Posterior cingulate gyrus (tissue), 11 donors: ENCODE measurements at regions of chr17 and their contacts with region 1.

Region 1: GRCh38 chr17:7561028-7561575 is 617 bp upstream of the SENP3 start:
- DNase-seq: peak; percentile 77 to 98 (median 90)

Region 2: DNA sequence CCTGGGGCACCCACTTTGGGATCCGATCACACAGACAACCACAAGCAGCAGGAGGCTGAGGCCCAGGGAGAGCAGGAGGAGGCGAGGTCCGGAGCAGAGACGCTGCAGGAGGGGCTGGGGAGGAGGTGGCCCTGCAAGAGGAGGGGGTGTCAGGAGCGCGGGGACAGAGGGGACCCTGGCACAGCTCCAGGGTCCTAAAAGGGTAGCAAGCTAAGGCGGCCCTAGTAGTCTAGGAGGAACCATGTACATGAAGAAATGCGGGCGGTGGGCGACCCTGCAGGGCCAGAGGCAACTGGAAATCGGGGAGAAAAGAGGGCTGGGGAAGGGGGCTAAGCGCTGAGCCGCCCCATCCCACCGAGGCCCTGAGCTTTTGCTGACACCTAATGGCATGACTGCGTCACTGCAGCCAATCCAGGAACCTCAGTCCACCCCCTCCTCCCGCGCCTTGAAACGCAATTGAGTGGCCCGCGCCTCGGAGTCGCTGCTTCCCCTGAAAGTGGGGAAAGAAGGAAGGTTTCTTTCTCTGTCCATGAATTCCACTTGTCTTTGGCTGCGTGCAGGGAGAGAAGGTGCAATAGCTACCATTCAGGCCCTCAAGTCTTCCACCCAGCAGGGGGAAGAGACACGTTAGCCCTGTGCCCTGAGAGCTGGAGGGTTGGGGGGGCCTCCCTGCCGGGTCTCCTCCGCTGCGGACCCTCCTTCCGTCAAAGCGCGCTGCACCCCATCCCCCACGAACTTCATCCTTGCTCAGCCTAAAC is 383.7 kb before region 1 on chr17:
- intact Hi-C with region 1: no loop called
- DNase-seq: peak; percentile 60 to 97 (median 78)

Region 3: DNA sequence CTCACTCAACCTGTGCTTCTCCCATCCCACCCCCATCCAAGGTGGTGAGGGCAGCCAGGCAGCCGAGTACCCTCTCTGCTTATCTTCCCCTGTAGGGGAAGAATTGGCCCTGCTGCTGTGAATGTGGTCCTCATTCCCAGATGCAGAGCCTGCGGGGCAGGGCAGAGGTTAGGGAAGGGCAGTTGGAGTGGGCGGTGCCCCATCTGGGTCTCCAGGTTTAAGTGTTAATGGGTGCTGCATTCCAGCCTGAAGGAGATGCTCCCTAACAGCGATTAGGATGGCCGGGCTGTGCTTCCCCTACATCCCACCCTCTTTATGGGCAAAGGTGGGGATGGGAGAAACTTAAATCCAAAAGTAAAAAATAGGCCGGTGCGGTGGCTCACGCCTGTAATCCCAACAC is 194.0 kb before region 1 on chr17:
- intact Hi-C with region 1: no loop called
- DNase-seq: no peak

Region 4: GRCh38 chr17:7513850-7514419 is 47.2 kb before region 1 on chr17:
- intact Hi-C with region 1: loop called (anchors 1 kb)
- DNase-seq: no peak